Mammary epithelial cell (primary cell): ENCODE measurements at regions of chrX and their contacts with region 1.

Region 1: GRCh38 chrX:40273356-40274050 is 175.7 kb upstream of the BCOR start:
- DNase-seq: no peak
- H3K4me3 ChIP-seq: no peak overlapping the region
- H3K27ac ChIP-seq: no peak overlapping the region
- H3K4me1 ChIP-seq: no peaks in the 10 kb centered on the region
- H3K27me3 ChIP-seq: no peaks in the 10 kb centered on the region
- CTCF ChIP-seq: no peak

Region 2: GRCh38 chrX:40349251-40349650 is 75.7 kb after region 1 on chrX:
- CTCF ChIA-PET with region 1: no interaction called
- dilution Hi-C with region 1: loop called (anchors 5 kb)
- in situ Hi-C with region 1: no loop called
- intact Hi-C with region 1: no loop called
- DNase-seq: no peak
- H3K4me3 ChIP-seq: no peak overlapping the region
- H3K27ac ChIP-seq: no peak overlapping the region
- H3K4me1 ChIP-seq: no peaks in the 10 kb centered on the region
- H3K27me3 ChIP-seq: no peaks in the 10 kb centered on the region
- CTCF ChIP-seq: no peak

Region 3: DNA sequence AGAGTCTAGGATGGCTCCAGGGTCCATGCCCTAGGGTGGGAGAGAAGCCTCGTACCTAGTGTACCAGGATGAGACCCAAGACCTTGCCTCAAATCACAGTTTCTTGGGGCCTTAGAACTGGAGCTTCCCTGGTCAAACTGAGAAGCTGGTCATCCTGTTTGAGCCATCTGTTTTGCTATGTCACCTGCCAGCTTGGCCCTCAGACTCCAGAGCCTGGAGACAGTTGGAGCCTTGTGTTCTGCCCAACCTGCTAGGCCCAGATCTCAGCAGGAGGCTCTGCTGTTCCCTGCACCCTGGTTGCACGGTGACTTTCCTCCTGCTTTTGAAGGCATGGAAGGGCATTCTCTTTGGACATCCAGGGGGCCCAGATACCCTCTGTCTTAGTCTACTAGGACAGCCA is 101.0 kb after region 1 on chrX:
- CTCF ChIA-PET with region 1: no interaction called
- dilution Hi-C with region 1: no loop called
- in situ Hi-C with region 1: no loop called
- intact Hi-C with region 1: no loop called
- DNase-seq: no peak
- H3K4me3 ChIP-seq: no peak overlapping the region
- H3K27ac ChIP-seq: no peak overlapping the region
- H3K4me1 ChIP-seq: no peaks in the 10 kb centered on the region
- H3K27me3 ChIP-seq: peaks cover 3% of the 10 kb centered on the region
- CTCF ChIP-seq: no peak